Thyroid gland (tissue), 4 donors: ENCODE measurements at regions of chr18 and their contacts with region 1.

Region 1: GRCh38 chr18:47756364-47757016 is 174.0 kb downstream of the SMAD2 start:
- DNase-seq: peak; percentile 58 to 72
- H3K4me3 ChIP-seq: no peak overlapping the region
- H3K27ac ChIP-seq: no peak overlapping the region
- H3K4me1 ChIP-seq: no peaks in the 10 kb centered on the region
- H3K27me3 ChIP-seq: no peaks in the 10 kb centered on the region
- CTCF ChIP-seq: peak; percentile 70 to 92 (median 79)
- POLR2A ChIP-seq: no peak

Region 2: DNA sequence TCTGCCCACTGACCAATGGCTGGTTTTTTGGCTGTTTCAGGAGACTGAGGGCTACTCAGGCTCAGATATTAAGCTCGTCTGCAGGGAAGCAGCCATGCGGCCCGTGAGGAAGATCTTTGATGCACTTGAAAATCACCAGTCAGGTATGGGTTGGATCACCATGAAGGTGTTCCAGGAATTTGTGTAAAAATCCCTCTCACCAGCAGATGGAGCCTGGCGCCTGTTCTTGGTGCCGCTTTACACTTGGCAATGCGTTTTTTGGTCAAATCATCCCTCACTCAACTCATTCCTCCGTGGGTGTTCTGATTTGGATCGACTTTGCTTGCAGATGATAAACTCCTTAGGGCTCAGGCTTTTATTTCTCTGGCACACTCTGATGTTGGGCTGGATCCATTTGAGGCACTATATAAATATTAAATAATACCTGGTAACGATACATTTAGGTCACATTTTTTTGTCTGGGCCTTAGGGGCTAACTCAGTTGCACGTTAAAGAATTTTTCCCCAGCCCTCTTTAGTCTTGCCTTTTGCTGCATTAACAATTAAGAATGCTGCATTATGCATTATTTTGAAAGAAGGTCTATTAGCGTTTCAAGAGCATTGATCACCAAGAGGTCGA is 656.2 kb before region 1 on chr18:
- intact Hi-C with region 1: loop called (anchors 5 kb)
- DNase-seq: peak; percentile 59 to 73
- H3K4me3 ChIP-seq: no peak overlapping the region
- H3K27ac ChIP-seq: no peak overlapping the region
- H3K4me1 ChIP-seq: no peaks in the 10 kb centered on the region
- H3K27me3 ChIP-seq: no peaks in the 10 kb centered on the region
- CTCF ChIP-seq: peak; percentile 59 to 86 (median 68)
- POLR2A ChIP-seq: no peak

Region 3: DNA sequence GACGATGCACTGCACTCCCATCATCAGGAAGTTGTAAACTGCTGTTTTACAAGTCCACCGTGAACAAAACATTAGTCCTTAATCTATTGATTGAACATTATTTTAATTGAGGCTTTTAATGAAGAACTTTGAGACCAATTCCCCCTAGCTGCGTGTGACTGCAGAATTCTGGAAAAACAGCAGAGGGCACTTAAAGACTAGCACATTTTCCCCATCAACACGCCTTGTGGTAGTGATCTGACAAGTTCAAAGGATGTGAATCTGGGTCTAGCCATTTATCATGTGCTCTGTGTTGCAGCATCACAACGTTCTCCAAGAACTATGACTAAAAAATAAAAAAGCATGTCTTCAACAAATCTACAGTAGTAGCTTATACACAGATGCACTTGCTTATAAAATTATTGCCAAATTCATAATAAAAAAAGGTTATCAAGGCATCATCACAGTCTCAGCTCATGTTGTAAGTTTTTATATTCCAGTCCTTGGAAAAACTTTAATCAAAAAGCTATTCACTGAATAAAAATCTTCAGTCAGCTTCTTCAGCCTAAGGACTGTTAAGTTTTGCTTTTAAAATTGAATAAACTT is 540.8 kb before region 1 on chr18:
- intact Hi-C with region 1: loop called (anchors 5 kb)
- DNase-seq: peak; percentile 5 to 6
- H3K4me3 ChIP-seq: no peak overlapping the region
- H3K27ac ChIP-seq: no peak overlapping the region
- H3K4me1 ChIP-seq: no peaks in the 10 kb centered on the region
- H3K27me3 ChIP-seq: no peaks in the 10 kb centered on the region
- CTCF ChIP-seq: peak in 5 of 6 experiments; percentile 17 to 81 (median 64)
- POLR2A ChIP-seq: no peak

Region 4: GRCh38 chr18:47772374-47773248 is 16.1 kb after region 1 on chr18:
- intact Hi-C with region 1: no loop called
- DNase-seq: peak; percentile 52 to 68
- H3K4me3 ChIP-seq: no peak overlapping the region
- H3K27ac ChIP-seq: no peak overlapping the region
- H3K4me1 ChIP-seq: no peaks in the 10 kb centered on the region
- H3K27me3 ChIP-seq: no peaks in the 10 kb centered on the region
- CTCF ChIP-seq: peak; percentile 61 to 79 (median 70)
- POLR2A ChIP-seq: no peak

Region 5: GRCh38 chr18:47936975-47937374 is 180.5 kb after region 1 on chr18:
- intact Hi-C with region 1: no loop called
- DNase-seq: no peak
- H3K4me3 ChIP-seq: no peak overlapping the region
- H3K27ac ChIP-seq: no peak overlapping the region
- H3K4me1 ChIP-seq: peaks cover 0 to 6% of the 10 kb centered on the region in 2 donors
- H3K27me3 ChIP-seq: no peaks in the 10 kb centered on the region
- CTCF ChIP-seq: no peak
- POLR2A ChIP-seq: no peak